PC-3 (cell line): ENCODE measurements at regions of chr20 and their contacts with region 1.

Region 1: GRCh38 chr20:51661609-51662178 is 106.5 kb downstream of the ATP9A start:
- DNase-seq: peak; percentile 99
- ATAC-seq: peak; percentile 60
- H3K4me3 ChIP-seq: no peak overlapping the region
- H3K27ac ChIP-seq: peak overlapping the region; percentile 88
- H3K4me1 ChIP-seq: peaks cover 55% of the 10 kb centered on the region
- H3K27me3 ChIP-seq: no peaks in the 10 kb centered on the region
- CTCF ChIP-seq: no peak

Region 2: GRCh38 chr20:51013577-51014330 is 647.9 kb before region 1 on chr20:
- CTCF ChIA-PET with region 1: no interaction called
- POLR2A ChIA-PET with region 1: no interaction called
- intact Hi-C with region 1: no loop called
- DNase-seq: no peak
- ATAC-seq: no peak
- H3K4me3 ChIP-seq: no peak overlapping the region
- H3K27ac ChIP-seq: no peak overlapping the region
- H3K4me1 ChIP-seq: no peaks in the 10 kb centered on the region
- H3K27me3 ChIP-seq: no peaks in the 10 kb centered on the region
- CTCF ChIP-seq: no peak

Region 3: DNA sequence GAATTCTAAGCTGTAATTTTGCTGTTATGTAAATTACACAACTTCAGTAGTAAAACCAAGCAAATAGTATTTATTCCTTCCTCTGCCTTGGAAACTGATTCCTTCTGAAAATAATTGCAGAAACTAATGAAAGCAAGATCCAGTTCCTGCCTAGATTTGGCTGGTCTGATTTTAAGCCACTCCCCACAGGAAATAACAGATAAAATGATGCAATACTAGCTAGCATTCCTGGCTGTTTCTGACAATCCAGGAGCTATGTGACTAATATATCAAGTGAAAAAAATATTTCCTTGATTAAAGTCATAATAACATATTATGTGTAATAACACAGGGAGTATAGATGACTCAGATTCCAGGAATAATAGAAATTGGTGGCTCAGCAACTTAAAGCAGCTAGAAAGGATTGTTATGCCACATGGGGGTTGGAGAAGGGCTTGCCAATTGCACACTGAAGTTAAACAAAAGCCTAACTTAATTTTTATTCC is 323.3 kb after region 1 on chr20:
- CTCF ChIA-PET with region 1: no interaction called
- POLR2A ChIA-PET with region 1: no interaction called
- intact Hi-C with region 1: loop called (anchors 10 kb)
- DNase-seq: peak; percentile 99
- ATAC-seq: peak; percentile 95
- H3K4me3 ChIP-seq: no peak overlapping the region
- H3K27ac ChIP-seq: peak overlapping the region; percentile 36
- H3K4me1 ChIP-seq: peaks cover 13% of the 10 kb centered on the region
- H3K27me3 ChIP-seq: no peaks in the 10 kb centered on the region
- CTCF ChIP-seq: no peak